ENCODE measurements at regions of chr2 and their contacts with region 1.

Region 1: DNA sequence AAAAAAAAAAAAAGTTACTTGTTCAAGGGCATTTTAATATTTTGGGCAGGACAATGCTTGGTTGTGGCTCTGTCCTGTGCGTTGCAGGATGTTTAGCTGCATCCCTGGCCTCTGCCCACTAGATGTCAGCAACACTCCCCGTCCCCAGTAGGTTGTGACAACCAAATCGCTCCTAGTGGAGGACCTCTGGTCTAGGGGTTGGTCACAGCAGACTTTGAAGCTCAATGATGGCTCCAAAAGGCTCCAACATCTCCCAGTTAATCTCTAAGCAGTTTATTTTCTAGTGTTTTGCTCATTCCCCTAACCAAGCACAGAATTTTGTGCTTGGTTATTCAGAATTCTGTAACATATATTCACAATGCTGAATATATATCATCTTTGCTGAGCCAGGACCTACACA is 67.0 kb downstream of the CHRNA1 start:
- DNase-seq: peak; percentile 20 to 79 (median 61)
- ATAC-seq: peak; percentile 91
- H3K4me3 ChIP-seq: no peak overlapping the region
- H3K4me3 Mint-ChIP-seq: no peak overlapping the region
- H3K27ac ChIP-seq: no peak overlapping the region
- H3K27ac Mint-ChIP-seq: no peak overlapping the region
- H3K4me1 ChIP-seq: no peaks in the 10 kb centered on the region
- H3K4me1 Mint-ChIP-seq: peaks cover 7% of the 10 kb centered on the region
- H3K27me3 ChIP-seq: no peaks in the 10 kb centered on the region
- H3K27me3 Mint-ChIP-seq: no peaks in the 10 kb centered on the region
- CTCF ChIP-seq: peak; percentile 79

Region 2: DNA sequence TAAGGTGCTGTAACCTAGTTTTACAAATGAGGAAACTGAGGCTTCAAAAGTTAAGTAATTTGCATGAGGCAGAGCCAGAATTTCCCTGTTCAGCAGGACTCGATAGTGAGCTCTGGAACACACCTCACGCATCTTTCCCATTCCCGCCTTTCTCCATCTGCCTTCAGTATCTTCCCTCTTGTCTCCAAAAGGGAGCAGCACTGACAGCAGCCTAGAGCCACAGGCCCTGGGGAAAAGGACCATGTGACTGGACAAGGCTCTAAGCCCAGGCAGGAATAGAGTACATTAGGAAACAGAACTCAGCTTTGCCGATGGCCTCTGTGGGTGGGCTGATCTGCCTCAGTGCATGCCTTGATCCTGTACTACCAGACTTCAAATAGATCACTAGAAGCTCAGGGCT is 231.9 kb before region 1 on chr2:
- CTCF ChIA-PET with region 1: interaction called, 21 read pairs
- POLR2A ChIA-PET with region 1: no interaction called
- intact Hi-C with region 1: no loop called
- DNase-seq: no peak
- ATAC-seq: no peak
- H3K4me3 ChIP-seq: no peak overlapping the region
- H3K4me3 Mint-ChIP-seq: no peak overlapping the region
- H3K27ac ChIP-seq: no peak overlapping the region
- H3K27ac Mint-ChIP-seq: no peak overlapping the region
- H3K4me1 ChIP-seq: no peaks in the 10 kb centered on the region
- H3K4me1 Mint-ChIP-seq: peaks cover 1% of the 10 kb centered on the region
- H3K27me3 ChIP-seq: no peaks in the 10 kb centered on the region
- H3K27me3 Mint-ChIP-seq: no peaks in the 10 kb centered on the region
- CTCF ChIP-seq: no peak

Region 3: DNA sequence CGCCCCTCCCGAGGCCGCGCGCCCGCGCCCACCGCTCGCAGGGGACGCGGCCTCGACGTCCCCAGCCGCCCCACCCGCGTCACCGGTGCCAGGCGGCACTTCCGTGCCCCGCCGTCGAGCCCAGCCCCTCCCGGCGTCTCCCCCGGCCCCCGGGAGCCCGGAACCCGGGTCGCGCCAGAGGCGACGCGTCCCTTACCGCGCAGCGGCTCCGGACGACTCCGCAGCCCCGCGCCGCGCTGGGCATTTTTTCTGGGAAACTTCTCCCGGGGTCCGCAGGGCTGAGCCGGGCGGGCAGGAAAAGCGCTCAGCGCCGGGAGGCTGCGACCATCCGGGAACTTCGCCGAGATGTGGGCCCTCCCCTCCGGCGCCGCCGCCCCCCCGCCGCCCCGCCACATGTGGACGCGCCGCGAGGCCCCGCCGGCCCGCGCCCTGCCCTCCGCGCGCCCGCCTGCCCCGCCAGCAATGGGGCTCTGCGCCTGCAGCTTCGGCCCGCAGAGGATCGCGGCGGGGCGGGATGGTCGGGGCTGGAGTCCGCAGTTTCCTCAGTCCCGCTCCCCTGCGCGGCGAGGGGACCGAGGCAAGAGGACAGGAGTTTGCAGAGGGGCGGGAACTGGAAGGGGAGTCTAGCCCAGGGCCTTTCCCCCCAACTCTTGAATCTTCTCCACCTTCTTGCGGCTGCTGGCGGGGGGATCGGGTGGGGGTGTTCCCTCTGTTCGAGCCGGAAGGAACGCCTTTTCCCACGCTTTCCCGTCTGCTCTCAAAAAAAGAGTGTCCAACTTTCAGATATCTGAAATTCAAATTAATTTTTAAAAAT is 14.5 kb before region 1 on chr2:
- CTCF ChIA-PET with region 1: interaction called, 108 read pairs
- POLR2A ChIA-PET with region 1: no interaction called
- intact Hi-C with region 1: no loop called
- DNase-seq: peak; percentile 33 to 83 (median 67)
- ATAC-seq: peak; percentile 74
- H3K4me3 ChIP-seq: peak overlapping the region; percentile 73 to 81
- H3K4me3 Mint-ChIP-seq: peak overlapping the region; percentile 91
- H3K27ac ChIP-seq: peak overlapping the region; percentile 41 to 70
- H3K27ac Mint-ChIP-seq: peak overlapping the region; percentile 93
- H3K4me1 ChIP-seq: peaks cover 35% of the 10 kb centered on the region
- H3K4me1 Mint-ChIP-seq: peaks cover 55% of the 10 kb centered on the region
- H3K27me3 ChIP-seq: no peaks in the 10 kb centered on the region
- H3K27me3 Mint-ChIP-seq: no peaks in the 10 kb centered on the region
- CTCF ChIP-seq: no peak

Region 4: GRCh38 chr2:174748948-174749347 is 51.7 kb after region 1 on chr2:
- CTCF ChIA-PET with region 1: interaction called, 155 read pairs
- POLR2A ChIA-PET with region 1: interaction called, 5 read pairs
- intact Hi-C with region 1: loop called (anchors 1 to 2 kb)
- DNase-seq: peak; percentile 53 to 83 (median 74)
- ATAC-seq: peak; percentile 45
- H3K4me3 ChIP-seq: no peak overlapping the region
- H3K4me3 Mint-ChIP-seq: no peak overlapping the region
- H3K27ac ChIP-seq: no peak overlapping the region
- H3K27ac Mint-ChIP-seq: peak overlapping the region; percentile 32
- H3K4me1 ChIP-seq: peaks cover 15% of the 10 kb centered on the region
- H3K4me1 Mint-ChIP-seq: peaks cover 33% of the 10 kb centered on the region
- H3K27me3 ChIP-seq: no peaks in the 10 kb centered on the region
- H3K27me3 Mint-ChIP-seq: no peaks in the 10 kb centered on the region
- CTCF ChIP-seq: peak; percentile 85

Region 5: GRCh38 chr2:174985630-174986029 is 288.4 kb after region 1 on chr2:
- CTCF ChIA-PET with region 1: interaction called, 68 read pairs
- POLR2A ChIA-PET with region 1: interaction called, 6 read pairs
- intact Hi-C with region 1: loop called (anchors 1 kb)
- DNase-seq: no peak
- ATAC-seq: no peak
- H3K4me3 ChIP-seq: no peak overlapping the region
- H3K4me3 Mint-ChIP-seq: no peak overlapping the region
- H3K27ac ChIP-seq: no peak overlapping the region
- H3K27ac Mint-ChIP-seq: no peak overlapping the region
- H3K4me1 ChIP-seq: no peaks in the 10 kb centered on the region
- H3K4me1 Mint-ChIP-seq: peaks cover 6% of the 10 kb centered on the region
- H3K27me3 ChIP-seq: no peaks in the 10 kb centered on the region
- H3K27me3 Mint-ChIP-seq: peaks cover 4% of the 10 kb centered on the region
- CTCF ChIP-seq: no peak

Region 6: DNA sequence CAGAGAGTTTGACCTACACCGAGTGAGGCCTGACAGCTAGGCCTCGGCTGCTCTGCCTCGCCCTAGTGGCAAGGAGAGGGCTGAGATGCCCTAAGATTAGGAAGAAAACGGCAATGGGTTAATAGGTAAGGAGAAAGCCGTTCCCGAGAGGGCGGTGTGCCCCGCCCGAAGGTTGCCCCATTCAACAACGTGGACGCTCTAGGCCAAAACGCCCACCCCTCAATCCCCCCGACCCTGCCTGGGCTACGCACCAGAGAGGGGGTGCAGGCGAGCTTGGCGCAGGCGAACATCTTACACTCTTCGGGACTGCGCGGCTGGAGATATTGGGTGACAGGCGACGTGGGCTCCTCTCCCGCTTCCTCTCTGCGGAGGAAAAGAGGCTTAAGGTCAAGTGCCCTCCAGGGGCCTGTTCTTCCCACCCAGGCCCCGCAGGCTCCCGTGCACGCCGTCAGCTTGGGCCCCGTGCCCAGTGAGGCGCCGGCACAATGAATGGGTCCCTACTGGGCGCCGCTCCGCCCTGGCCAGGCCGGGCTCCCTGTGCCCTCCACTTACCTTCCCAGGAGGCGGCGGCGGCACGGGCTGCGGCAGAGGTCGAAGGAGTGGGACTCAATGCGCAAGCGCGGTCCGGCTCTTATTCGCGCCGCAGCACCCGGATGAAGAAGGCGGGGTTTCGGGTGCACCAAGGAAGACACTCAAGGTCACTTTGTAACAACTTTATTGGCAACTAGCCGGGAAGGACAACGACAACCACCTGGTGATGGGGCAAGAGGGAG is 484.0 kb after region 1 on chr2 and contains the start of gene ATP5MC3:
- CTCF ChIA-PET with region 1: interaction called, 4 read pairs
- POLR2A ChIA-PET with region 1: no interaction called
- intact Hi-C with region 1: loop called (anchors 5 to 10 kb)
- DNase-seq: peak; percentile 80 to 97 (median 92)
- ATAC-seq: peak; percentile 90
- H3K4me3 ChIP-seq: peak within 1 kb of the TSS; percentile 88 to 96
- H3K4me3 Mint-ChIP-seq: peak within 1 kb of the TSS; percentile 94
- H3K27ac ChIP-seq: peak within 1 kb of the TSS; percentile 73 to 76
- H3K27ac Mint-ChIP-seq: peak within 1 kb of the TSS; percentile 87
- H3K4me1 ChIP-seq: peaks cover 13% of the 10 kb centered on the region
- H3K4me1 Mint-ChIP-seq: peaks cover 27% of the 10 kb centered on the region
- H3K27me3 ChIP-seq: no peaks in the 10 kb centered on the region
- H3K27me3 Mint-ChIP-seq: no peaks in the 10 kb centered on the region
- CTCF ChIP-seq: no peak
- total RNA-seq, gene ATP5MC3: 70.2 to 73.4 TPM

Region 7: GRCh38 chr2:175326801-175327200 is 629.5 kb after region 1 on chr2:
- CTCF ChIA-PET with region 1: interaction called, 3 read pairs
- POLR2A ChIA-PET with region 1: no interaction called
- intact Hi-C with region 1: loop called in 1 of 2 experiments (anchors 5 kb)
- DNase-seq: no peak
- ATAC-seq: no peak
- H3K4me3 ChIP-seq: no peak overlapping the region
- H3K4me3 Mint-ChIP-seq: no peak overlapping the region
- H3K27ac ChIP-seq: no peak overlapping the region
- H3K27ac Mint-ChIP-seq: no peak overlapping the region
- H3K4me1 ChIP-seq: no peaks in the 10 kb centered on the region
- H3K4me1 Mint-ChIP-seq: no peaks in the 10 kb centered on the region
- H3K27me3 ChIP-seq: no peaks in the 10 kb centered on the region
- H3K27me3 Mint-ChIP-seq: peaks cover 2% of the 10 kb centered on the region
- CTCF ChIP-seq: no peak